Activated T-helper 1 cell treated with anti-CD3 and anti-CD28 coated beads, Interleukin-12 subunit alpha, Interleukin-12 subunit beta, Interleukin-2, Interleukin-4 antibody, amounts not matched to agents 30 ng/mL and 10 ng/mL and 1 ng/mL, durations not matched to agents 14 hours and 24 hours and 36 hours (primary cell): ENCODE measurements at regions of chr1 and their contacts with region 1.

Region 1: GRCh38 chr1:88877382-88877825 is 14.0 kb downstream of the GTF2B start:
- DNase-seq: no peak
- H3K4me3 Mint-ChIP-seq: no peak overlapping the region
- H3K27ac Mint-ChIP-seq: no peak overlapping the region
- H3K4me1 Mint-ChIP-seq: peaks cover 22% of the 10 kb centered on the region
- H3K27me3 Mint-ChIP-seq: no peaks in the 10 kb centered on the region

Region 2: DNA sequence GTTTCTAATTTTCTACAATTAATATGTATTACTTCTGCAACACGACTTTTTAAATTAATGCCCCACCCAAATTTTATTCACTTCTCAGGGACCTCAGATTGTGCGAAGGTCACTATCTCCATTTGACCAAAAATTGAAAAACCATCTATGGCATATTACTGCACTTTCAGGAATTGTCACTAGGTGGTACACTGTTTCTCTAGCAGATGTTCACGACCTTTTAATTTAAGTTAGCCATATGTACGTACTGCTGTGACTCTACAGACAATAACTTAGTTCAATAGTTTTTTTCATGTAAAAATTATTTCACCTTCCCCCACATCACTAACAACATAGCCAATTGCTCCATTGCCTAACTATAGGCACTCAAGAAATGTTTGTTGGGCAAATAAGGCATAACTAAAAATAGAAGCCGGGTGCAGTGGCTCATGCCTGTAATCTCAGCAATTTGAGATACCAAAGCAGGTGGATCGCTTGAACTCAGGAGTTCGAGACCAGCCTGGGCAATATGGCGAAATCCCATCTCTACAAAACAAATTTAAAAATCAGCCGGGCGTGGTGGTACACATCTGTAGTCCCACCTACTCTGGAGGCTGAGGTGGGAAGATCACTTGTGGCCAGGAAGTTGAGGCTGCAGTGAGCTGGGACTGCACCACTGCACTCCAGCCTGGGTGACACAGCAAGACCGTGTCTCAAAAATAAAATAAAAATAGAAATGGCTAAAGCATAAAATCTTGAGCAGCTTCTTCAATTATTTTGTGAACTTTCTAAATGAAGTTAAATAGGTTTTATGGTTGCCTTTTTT is 269.1 kb before region 1 on chr1:
- intact Hi-C with region 1: loop called (anchors 2 kb)
- DNase-seq: no peak
- H3K4me3 Mint-ChIP-seq: no peak overlapping the region
- H3K27ac Mint-ChIP-seq: no peak overlapping the region
- H3K4me1 Mint-ChIP-seq: no peaks in the 10 kb centered on the region
- H3K27me3 Mint-ChIP-seq: peaks cover 11% of the 10 kb centered on the region

Region 3: GRCh38 chr1:88655685-88656299 is 221.6 kb before region 1 on chr1:
- intact Hi-C with region 1: loop called (anchors 1 kb)
- DNase-seq: no peak
- H3K4me3 Mint-ChIP-seq: no peak overlapping the region
- H3K27ac Mint-ChIP-seq: no peak overlapping the region
- H3K4me1 Mint-ChIP-seq: peaks cover 15% of the 10 kb centered on the region
- H3K27me3 Mint-ChIP-seq: peaks cover 1% of the 10 kb centered on the region

Region 4: DNA sequence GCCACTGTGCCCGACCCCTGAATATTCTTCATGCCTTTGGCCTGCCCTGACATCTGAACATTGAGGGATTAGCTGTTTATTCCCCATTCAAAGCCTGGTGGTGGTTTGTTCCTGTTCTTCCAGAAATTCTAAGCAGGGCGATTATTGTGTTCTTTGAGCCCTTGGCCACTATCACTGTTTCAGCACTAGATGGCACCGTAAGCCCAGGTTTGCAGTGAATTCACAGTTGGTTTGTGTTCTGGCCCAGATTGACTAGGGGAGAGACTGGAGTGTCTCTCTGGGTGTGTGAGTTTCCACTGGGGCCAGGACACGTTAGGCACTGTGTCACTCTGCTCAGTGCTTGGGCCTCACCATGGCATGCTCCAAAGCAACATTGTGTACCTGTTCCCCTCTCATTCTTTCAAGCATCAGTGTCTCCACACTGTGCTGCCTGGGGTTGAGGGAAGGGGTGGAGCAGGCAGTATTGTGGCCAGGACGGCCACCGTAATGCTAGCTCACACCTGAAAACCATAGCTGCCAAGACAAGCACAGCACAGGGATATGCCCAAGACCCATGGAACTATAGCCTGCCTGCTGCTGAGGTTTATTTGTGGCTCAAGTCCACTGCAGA is 140.7 kb before region 1 on chr1:
- intact Hi-C with region 1: loop called (anchors 1 kb)
- DNase-seq: peak; percentile 16
- H3K4me3 Mint-ChIP-seq: no peak overlapping the region
- H3K27ac Mint-ChIP-seq: no peak overlapping the region
- H3K4me1 Mint-ChIP-seq: peaks cover 17% of the 10 kb centered on the region
- H3K27me3 Mint-ChIP-seq: no peaks in the 10 kb centered on the region

Region 5: GRCh38 chr1:88751714-88752113 is 125.7 kb before region 1 on chr1:
- intact Hi-C with region 1: no loop called
- DNase-seq: no peak
- H3K4me3 Mint-ChIP-seq: no peak overlapping the region
- H3K27ac Mint-ChIP-seq: no peak overlapping the region
- H3K4me1 Mint-ChIP-seq: no peaks in the 10 kb centered on the region
- H3K27me3 Mint-ChIP-seq: no peaks in the 10 kb centered on the region

Region 6: GRCh38 chr1:88800382-88801051 is 76.9 kb before region 1 on chr1:
- intact Hi-C with region 1: loop called (anchors 1 kb)
- DNase-seq: peak; percentile 16
- H3K4me3 Mint-ChIP-seq: no peak overlapping the region
- H3K27ac Mint-ChIP-seq: no peak overlapping the region
- H3K4me1 Mint-ChIP-seq: peaks cover 14% of the 10 kb centered on the region
- H3K27me3 Mint-ChIP-seq: no peaks in the 10 kb centered on the region

Region 7: GRCh38 chr1:89085781-89086180 is 208.4 kb after region 1 on chr1:
- intact Hi-C with region 1: no loop called
- DNase-seq: peak; percentile 47
- H3K4me3 Mint-ChIP-seq: no peak overlapping the region
- H3K27ac Mint-ChIP-seq: no peak overlapping the region
- H3K4me1 Mint-ChIP-seq: peaks cover 8% of the 10 kb centered on the region
- H3K27me3 Mint-ChIP-seq: peaks cover 2% of the 10 kb centered on the region

Region 8: DNA sequence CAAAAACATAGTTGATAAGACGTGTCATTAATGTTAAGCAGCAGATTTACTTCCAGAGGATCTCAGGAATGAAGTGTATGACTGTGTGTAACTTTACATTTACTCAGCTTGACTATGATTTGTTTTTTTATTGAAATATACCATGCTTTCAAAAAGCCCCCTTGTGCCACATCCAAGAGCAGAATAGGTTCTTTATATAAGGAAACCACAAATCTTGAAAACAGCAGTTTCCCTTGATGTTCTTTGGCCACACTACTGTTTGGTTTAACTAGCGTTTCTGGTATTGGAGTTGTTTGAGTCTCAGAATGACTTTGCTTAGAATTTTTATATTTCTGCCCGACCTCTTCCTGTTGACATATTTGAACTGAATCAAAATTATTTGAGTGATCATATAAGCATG is 780.5 kb after region 1 on chr1:
- intact Hi-C with region 1: no loop called
- DNase-seq: peak; percentile 24
- H3K4me3 Mint-ChIP-seq: peak overlapping the region; percentile 62
- H3K27ac Mint-ChIP-seq: peak overlapping the region; percentile 72
- H3K4me1 Mint-ChIP-seq: peaks cover 91% of the 10 kb centered on the region
- H3K27me3 Mint-ChIP-seq: no peaks in the 10 kb centered on the region